Naive thymus-derived CD4-positive, alpha-beta T cell (primary cell): ENCODE measurements at regions of chr9 and their contacts with region 1.

Region 1: GRCh38 chr9:34233672-34234071 is 54.8 kb downstream of the UBAP1 start:
- DNase-seq: no peak
- ATAC-seq: no peak
- H3K4me3 ChIP-seq: no peak overlapping the region
- H3K4me3 Mint-ChIP-seq: no peak overlapping the region
- H3K27ac ChIP-seq: no peak overlapping the region
- H3K27ac Mint-ChIP-seq: peak overlapping the region in 4 of 9 donors; percentile 3 to 69 (median 44)
- H3K4me1 ChIP-seq: no peaks in the 10 kb centered on the region
- H3K4me1 Mint-ChIP-seq: peaks cover 4 to 31% (median 14%) of the 10 kb centered on the region in 7 donors
- H3K27me3 ChIP-seq: no peaks in the 10 kb centered on the region
- H3K27me3 Mint-ChIP-seq: no peaks in the 10 kb centered on the region

Region 2: DNA sequence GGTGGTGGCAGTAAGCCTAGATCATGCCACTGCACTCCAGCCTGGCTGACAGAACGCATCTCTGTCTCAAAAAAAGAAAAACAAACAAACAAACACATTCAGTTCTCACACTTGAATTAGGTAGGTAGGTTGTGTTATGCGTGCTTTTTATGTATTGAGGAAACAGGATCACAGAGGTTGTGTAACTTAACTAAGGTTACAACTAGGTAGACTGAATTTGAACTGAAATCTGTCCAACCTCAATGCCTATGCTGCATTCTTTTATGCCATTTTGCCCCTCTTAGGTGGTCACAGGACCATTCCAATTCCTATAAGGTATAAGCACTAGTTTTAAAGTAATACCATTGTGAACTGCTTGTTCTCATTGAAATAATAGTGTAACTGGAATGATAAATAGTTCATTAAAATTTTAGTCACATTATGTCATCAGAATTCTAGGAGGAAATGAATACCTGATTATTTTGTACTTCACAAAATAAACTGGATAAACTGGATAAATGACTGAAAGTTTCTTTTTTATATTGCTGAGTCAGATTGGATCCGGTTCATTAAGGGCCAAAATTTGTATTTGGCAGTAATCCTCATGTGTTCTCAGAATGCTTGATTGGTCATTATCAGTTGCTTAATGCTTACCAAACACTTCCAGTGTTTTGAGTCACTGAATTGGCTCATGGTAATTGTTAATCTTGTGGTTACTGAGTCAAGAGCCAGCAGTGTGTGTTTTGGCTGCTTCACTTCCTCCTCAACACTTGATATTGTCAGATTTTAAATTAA is 47.7 kb before region 1 on chr9:
- CTCF ChIA-PET with region 1: no interaction called
- POLR2A ChIA-PET with region 1: no interaction called
- intact Hi-C with region 1: loop called in 1 of 2 experiments (anchors 10 kb)
- DNase-seq: peak in 3 of 9 donors; percentile 13 to 19 (median 14)
- ATAC-seq: peak; percentile 87
- H3K4me3 ChIP-seq: no peak overlapping the region
- H3K4me3 Mint-ChIP-seq: peak overlapping the region in 7 of 10 donors; percentile 12 to 50 (median 36)
- H3K27ac ChIP-seq: no peak overlapping the region
- H3K27ac Mint-ChIP-seq: peak overlapping the region in 3 of 9 donors; percentile 10 to 38 (median 13)
- H3K4me1 ChIP-seq: peaks cover 10 to 14% of the 10 kb centered on the region in 2 donors
- H3K4me1 Mint-ChIP-seq: peaks cover 23 to 63% (median 55%) of the 10 kb centered on the region in 7 donors
- H3K27me3 ChIP-seq: no peaks in the 10 kb centered on the region
- H3K27me3 Mint-ChIP-seq: no peaks in the 10 kb centered on the region